ENCODE measurements at regions of chr6 and their contacts with region 1.

Region 1: DNA sequence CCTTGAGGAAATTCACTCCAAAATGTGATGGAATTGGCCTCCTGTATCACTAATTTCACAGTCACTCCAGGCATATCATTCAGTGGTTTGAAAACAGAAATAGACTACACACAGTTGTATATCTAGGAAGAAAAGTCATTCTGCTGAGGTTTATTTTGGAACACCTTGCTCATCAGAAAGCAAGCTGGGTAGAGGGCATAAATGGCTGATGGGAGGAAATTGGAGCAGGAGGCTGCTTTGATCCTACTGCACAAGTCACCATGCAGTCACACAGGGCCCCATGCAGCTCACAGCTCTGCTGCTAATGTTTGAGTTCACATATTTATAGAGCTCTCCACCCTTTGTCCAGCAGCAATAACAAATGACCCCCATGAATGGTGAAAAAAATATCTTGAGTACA is 12.3 kb downstream of the NHLRC1 start:
- DNase-seq: no peak
- H3K4me3 ChIP-seq: no peak overlapping the region
- H3K27ac ChIP-seq: no peak overlapping the region
- H3K4me1 ChIP-seq: no peaks in the 10 kb centered on the region
- H3K27me3 ChIP-seq: no peaks in the 10 kb centered on the region
- CTCF ChIP-seq: no peak
- EP300 ChIP-seq: no peak
- POLR2A ChIP-seq: no peak

Region 2: DNA sequence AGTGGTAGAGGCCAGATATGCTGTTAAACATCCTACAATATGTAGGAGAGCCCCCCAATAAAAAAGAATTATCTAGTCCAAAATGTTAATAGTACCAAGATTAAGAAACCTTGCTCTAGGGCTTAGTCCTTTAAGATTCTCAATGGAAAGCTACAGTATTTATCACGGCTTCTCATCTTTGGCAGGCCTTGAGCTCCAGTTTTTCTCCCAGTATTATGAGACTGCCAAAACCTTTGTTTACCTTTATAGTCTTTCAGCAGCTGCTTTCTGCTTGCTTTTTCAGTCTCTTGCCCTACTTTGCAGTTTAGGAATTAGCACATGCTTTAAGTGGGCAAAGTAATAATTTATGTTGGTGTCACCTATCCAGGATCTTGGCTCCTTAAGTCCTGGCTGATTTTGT is 47.4 kb before region 1 on chr6:
- intact Hi-C with region 1: loop called in 1 of 4 experiments (anchors 1 kb)
- DNase-seq: no peak
- H3K4me3 ChIP-seq: no peak overlapping the region
- H3K27ac ChIP-seq: no peak overlapping the region
- H3K4me1 ChIP-seq: no peaks in the 10 kb centered on the region
- H3K27me3 ChIP-seq: no peaks in the 10 kb centered on the region
- CTCF ChIP-seq: no peak
- EP300 ChIP-seq: no peak
- POLR2A ChIP-seq: no peak

Region 3: GRCh38 chr6:18122124-18123093 is 12.2 kb after region 1 on chr6 and contains the start of gene NHLRC1:
- intact Hi-C with region 1: no loop called
- DNase-seq: peak; percentile 81 to 89 (median 84)
- H3K4me3 ChIP-seq: peak within 1 kb of the TSS; percentile 60
- H3K27ac ChIP-seq: no peak within 1 kb of the TSS
- H3K4me1 ChIP-seq: peaks cover 3% of the 10 kb centered on the region
- H3K27me3 ChIP-seq: no peaks in the 10 kb centered on the region
- CTCF ChIP-seq: peak; percentile 73 to 91 (median 86)
- EP300 ChIP-seq: no peak
- POLR2A ChIP-seq: peak; percentile 20
- total RNA-seq, gene NHLRC1: 0.46 to 1.7 (median 1.2) TPM